Right cardiac atrium (tissue), 5 donors: ENCODE measurements at regions of chr6 and their contacts with region 1.

Region 1: DNA sequence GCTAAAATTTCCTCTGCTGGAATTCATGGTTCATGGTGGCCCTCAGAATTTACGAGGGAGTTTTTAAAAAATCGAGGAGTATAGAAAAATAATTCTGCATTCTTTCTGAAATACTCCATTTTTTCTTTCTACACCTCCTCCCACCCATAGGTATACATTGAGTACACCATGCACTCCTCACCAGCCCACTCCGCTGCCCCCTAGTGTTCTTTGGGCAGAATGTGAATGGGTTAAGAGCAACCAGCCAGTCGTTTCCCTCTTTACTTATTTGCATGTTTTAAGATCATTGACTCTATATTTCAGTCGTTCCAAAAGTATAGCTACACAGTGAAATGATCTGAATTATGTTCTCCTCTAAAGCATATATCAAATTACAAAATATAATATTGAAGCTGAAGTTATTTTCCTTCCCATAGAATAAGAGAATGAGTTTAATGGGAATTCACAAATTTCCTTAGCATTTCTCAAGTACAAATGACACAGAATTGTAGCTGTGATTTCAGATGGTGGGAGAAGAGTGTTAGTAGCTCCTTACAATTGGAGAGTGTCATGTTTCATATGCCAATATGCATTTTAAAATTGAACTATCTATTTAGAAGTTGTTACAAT is 977.7 kb upstream of the SLC35B3 start:
- DNase-seq: peak in 2 of 3 donors; percentile 6 to 49
- ATAC-seq: no peak
- H3K4me3 ChIP-seq: no peak overlapping the region
- H3K27ac ChIP-seq: no peak overlapping the region
- H3K4me1 ChIP-seq: no peaks in the 10 kb centered on the region
- H3K27me3 ChIP-seq: no peaks in the 10 kb centered on the region

Region 2: DNA sequence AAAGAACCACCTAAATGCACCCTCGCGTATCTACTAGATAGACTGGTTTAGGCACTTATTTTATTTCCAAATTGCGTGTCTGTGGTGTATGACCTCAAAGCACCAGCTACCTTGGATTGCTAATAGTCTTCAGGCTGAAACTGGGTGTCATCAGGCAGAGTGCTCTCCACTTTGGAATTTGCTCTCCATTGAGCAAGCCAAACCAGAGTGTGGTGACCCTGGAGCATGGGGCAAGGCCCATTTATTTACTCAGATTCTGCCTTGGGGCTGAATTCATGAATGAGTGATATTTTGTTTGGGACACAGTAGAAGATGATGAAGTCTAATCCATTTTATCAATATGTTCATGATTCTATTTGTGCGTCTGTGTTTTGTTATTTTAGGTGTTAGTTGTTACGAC is 164.9 kb before region 1 on chr6:
- intact Hi-C with region 1: loop called in 1 of 4 experiments (anchors 10 kb)
- DNase-seq: no peak
- ATAC-seq: no peak
- H3K4me3 ChIP-seq: no peak overlapping the region
- H3K27ac ChIP-seq: no peak overlapping the region
- H3K4me1 ChIP-seq: no peaks in the 10 kb centered on the region
- H3K27me3 ChIP-seq: no peaks in the 10 kb centered on the region

Region 3: DNA sequence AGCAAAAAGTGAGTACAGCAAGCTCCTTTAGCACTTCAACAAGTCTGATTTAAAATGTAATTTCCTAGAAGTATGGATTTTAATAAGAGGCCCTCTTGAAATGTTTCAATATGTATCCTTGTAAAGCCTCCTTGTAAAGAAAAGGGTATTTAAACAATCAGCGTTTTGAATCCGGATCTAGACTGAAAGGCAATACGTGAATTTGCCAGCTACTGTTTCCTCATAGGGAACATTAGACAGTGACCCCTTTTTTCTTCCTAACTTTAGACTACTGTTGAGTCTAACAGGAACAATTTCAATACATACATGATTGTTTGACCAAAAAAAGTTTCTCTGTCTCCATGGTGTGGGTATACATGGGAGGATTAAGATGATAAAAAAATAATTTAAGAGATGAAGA is 606.8 kb after region 1 on chr6:
- intact Hi-C with region 1: no loop called
- DNase-seq: no peak
- ATAC-seq: no peak
- H3K4me3 ChIP-seq: no peak overlapping the region
- H3K27ac ChIP-seq: no peak overlapping the region
- H3K4me1 ChIP-seq: no peaks in the 10 kb centered on the region
- H3K27me3 ChIP-seq: no peaks in the 10 kb centered on the region